ENCODE measurements at regions of chr3 and their contacts with region 1.

Region 1: GRCh38 chr3:115518100-115518852 is 105.0 kb upstream of the GAP43 start:
- DNase-seq: peak; percentile 81 to 94 (median 85)
- ATAC-seq: peak; percentile 95 to 98 (median 98)
- H3K4me3 ChIP-seq: no peak overlapping the region
- H3K27ac ChIP-seq: peak overlapping the region; percentile 9 to 81 (median 68)
- H3K4me1 ChIP-seq: peaks cover 0 to 27% (median 15%) of the 10 kb centered on the region in 12 donors
- H3K27me3 ChIP-seq: no peaks in the 10 kb centered on the region
- CTCF ChIP-seq: no peak
- POLR2A ChIP-seq: no peak

Region 2: GRCh38 chr3:114308830-114309229 is 1209.4 kb before region 1 on chr3:
- intact Hi-C with region 1: no loop called
- DNase-seq: no peak
- ATAC-seq: no peak
- H3K4me3 ChIP-seq: no peak overlapping the region
- H3K27ac ChIP-seq: peak overlapping the region in 1 of 12 donors; percentile 63
- H3K4me1 ChIP-seq: peaks cover 0 to 3% (median 0%) of the 10 kb centered on the region in 12 donors
- H3K27me3 ChIP-seq: no peaks in the 10 kb centered on the region
- CTCF ChIP-seq: no peak
- POLR2A ChIP-seq: no peak

Region 3: GRCh38 chr3:115380883-115381572 is 137.2 kb before region 1 on chr3:
- intact Hi-C with region 1: loop called in 5 of 10 experiments (anchors 5 to 10 kb)
- DNase-seq: no peak
- ATAC-seq: peak; percentile 30 to 83 (median 66)
- H3K4me3 ChIP-seq: no peak overlapping the region
- H3K27ac ChIP-seq: peak overlapping the region in 4 of 12 donors; percentile 15 to 43 (median 32)
- H3K4me1 ChIP-seq: peaks cover 0 to 19% (median 2%) of the 10 kb centered on the region in 12 donors
- H3K27me3 ChIP-seq: no peaks in the 10 kb centered on the region
- CTCF ChIP-seq: peak in 2 of 12 donors; percentile 9 to 22
- POLR2A ChIP-seq: no peak

Region 4: GRCh38 chr3:115885621-115886020 is 367.3 kb after region 1 on chr3:
- intact Hi-C with region 1: no loop called
- DNase-seq: no peak
- ATAC-seq: no peak
- H3K4me3 ChIP-seq: no peak overlapping the region
- H3K27ac ChIP-seq: no peak overlapping the region
- H3K4me1 ChIP-seq: no peaks in the 10 kb centered on the region
- H3K27me3 ChIP-seq: peaks cover 0 to 6% (median 0%) of the 10 kb centered on the region in 9 donors
- CTCF ChIP-seq: no peak
- POLR2A ChIP-seq: no peak

Measured in heart left ventricle (tissue), 16 donors.